ENCODE measurements at regions of chr12 and their contacts with region 1.

Region 1: GRCh38 chr12:63826006-63826585 is 18.4 kb upstream of the SRGAP1 start:
- DNase-seq: no peak
- ATAC-seq: peak; percentile 38 to 63

Region 2: DNA sequence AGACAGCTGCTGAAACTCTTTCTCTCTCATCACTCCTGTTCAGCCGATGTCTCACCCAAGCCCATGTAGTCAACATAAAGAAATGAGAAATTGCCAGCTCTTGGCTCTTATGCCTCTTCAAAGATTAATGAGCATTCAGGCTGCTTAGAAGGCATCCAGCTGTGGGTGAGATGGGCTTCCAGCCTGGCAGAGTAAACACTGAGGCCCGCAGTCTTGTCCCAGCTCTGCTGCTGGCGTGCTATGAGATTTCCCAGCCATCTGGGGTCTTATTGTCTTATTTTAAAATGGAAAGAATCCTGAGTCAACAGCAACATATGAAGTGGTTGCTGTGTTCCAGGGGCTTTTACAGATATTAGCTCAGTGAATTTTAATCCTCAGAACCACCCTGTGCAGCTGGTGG is 33.8 kb before region 1 on chr12:
- intact Hi-C with region 1: no loop called
- DNase-seq: no peak
- ATAC-seq: no peak

Region 3: GRCh38 chr12:64392221-64392620 is 566.1 kb after region 1 on chr12:
- intact Hi-C with region 1: loop called in 1 of 2 experiments (anchors 5 kb)
- DNase-seq: no peak
- ATAC-seq: no peak

Region 4: DNA sequence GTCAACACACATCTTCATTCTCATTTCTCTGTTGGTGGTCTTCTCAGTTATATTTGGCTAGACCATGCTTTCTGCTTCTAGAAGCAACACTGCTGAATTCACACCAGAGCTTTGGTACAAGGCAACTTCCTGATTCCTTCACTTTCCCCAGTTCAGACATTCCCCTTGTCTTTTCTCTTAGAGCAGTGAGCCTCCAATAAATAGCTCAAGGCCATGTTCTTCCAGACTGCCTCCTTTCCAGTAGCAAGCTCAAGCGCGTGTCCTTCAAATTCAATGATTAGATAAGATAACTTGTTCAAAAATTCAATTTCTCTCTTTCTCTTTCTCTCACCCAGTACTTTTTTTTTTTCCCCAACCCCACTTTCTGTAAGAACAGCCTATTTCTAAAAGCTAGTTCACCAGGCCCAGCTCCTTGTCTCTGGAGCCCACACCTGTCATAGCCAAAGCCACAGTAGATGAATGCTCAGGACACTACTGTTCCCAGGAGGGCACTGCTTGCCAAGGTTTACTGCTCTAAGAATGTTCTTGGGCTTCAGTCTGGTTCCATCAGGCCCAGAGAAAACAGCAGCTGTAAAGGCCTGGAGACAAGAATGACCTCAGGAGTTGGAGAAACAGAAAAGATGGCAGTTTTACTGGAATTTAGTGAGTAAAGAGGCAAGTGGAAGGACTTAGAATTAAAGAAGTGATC is 643.5 kb after region 1 on chr12:
- intact Hi-C with region 1: no loop called
- DNase-seq: no peak
- ATAC-seq: peak in 1 of 2 donors; percentile 59

Measured in left cardiac atrium (tissue), 4 donors.